Heart right ventricle (tissue), 16 donors: ENCODE measurements at regions of chr18 and their contacts with region 1.

Region 1: GRCh38 chr18:36296650-36297416 is 680 bp upstream of the FHOD3 start:
- DNase-seq: peak; percentile 52 to 67
- ATAC-seq: peak; percentile 47 to 81 (median 72)
- H3K4me3 ChIP-seq: peak overlapping the region; percentile 54 to 90 (median 78)
- H3K27ac ChIP-seq: peak overlapping the region; percentile 34 to 96 (median 84)
- H3K4me1 ChIP-seq: peaks cover 6 to 42% (median 14%) of the 10 kb centered on the region in 9 donors
- H3K27me3 ChIP-seq: peaks cover 0 to 74% (median 39%) of the 10 kb centered on the region in 7 donors
- CTCF ChIP-seq: peak in 8 of 9 donors; percentile 8 to 60 (median 43)

Region 2: GRCh38 chr18:35904389-35905037 is 392.3 kb before region 1 on chr18:
- intact Hi-C with region 1: no loop called
- DNase-seq: no peak
- ATAC-seq: peak in 1 of 8 donors; percentile 38
- H3K4me3 ChIP-seq: no peak overlapping the region
- H3K27ac ChIP-seq: no peak overlapping the region
- H3K4me1 ChIP-seq: no peaks in the 10 kb centered on the region
- H3K27me3 ChIP-seq: no peaks in the 10 kb centered on the region
- CTCF ChIP-seq: no peak

Region 3: GRCh38 chr18:35949903-35950627 is 346.8 kb before region 1 on chr18:
- intact Hi-C with region 1: no loop called
- DNase-seq: peak; percentile 45 to 60
- ATAC-seq: peak; percentile 74 to 92 (median 84)
- H3K4me3 ChIP-seq: peak overlapping the region; percentile 26 to 68 (median 62)
- H3K27ac ChIP-seq: no peak overlapping the region
- H3K4me1 ChIP-seq: peaks cover 0 to 9% (median 3%) of the 10 kb centered on the region in 9 donors
- H3K27me3 ChIP-seq: peaks cover 0 to 19% (median 0%) of the 10 kb centered on the region in 7 donors
- CTCF ChIP-seq: peak; percentile 88 to 96 (median 93)

Region 4: DNA sequence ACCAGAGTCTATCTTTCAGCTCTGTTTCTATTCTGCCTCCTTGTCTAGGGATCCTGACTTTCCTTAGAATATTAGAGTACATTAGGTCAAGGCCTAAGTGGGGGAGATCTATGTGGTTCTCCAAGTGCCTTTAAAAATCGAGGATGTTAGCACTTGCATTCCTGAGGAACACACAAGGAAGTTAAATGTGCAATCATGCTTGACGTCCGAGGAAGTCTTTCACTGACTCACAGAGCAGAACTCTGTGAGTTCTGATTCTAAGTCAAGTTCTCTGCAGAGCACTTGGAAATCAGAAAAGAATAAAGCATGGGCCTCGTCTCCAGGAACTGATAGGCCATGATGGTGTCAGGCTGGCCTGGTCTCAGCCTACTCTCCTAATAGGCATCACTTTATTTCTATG is 17.9 kb after region 1 on chr18:
- intact Hi-C with region 1: no loop called
- DNase-seq: no peak
- ATAC-seq: no peak
- H3K4me3 ChIP-seq: no peak overlapping the region
- H3K27ac ChIP-seq: peak overlapping the region in 4 of 10 donors; percentile 5 to 58 (median 22)
- H3K4me1 ChIP-seq: peaks cover 0 to 63% (median 32%) of the 10 kb centered on the region in 9 donors
- H3K27me3 ChIP-seq: peaks cover 0 to under 1% (median 0%) of the 10 kb centered on the region in 7 donors
- CTCF ChIP-seq: no peak

Region 5: DNA sequence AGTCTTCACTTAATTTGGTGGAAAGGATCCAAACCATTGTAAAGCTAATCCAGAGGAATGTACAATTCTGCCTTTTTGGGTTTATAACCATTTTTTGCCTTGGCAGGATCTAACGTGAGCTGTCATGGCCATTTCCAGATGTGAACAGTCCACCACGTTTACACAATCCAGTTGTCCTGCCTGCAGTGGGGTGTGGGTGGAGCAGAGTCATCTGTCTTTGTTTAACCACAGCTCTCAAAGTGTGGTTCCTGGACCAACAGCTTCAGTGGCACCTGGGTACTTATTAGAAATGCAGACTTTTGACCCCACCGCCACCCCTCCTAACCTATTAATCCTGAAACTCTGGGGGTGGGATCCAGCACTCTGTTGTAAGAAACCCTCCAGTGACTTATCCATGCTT is 36.6 kb after region 1 on chr18:
- intact Hi-C with region 1: loop called in 1 of 10 experiments (anchors 5 kb)
- DNase-seq: no peak
- ATAC-seq: no peak
- H3K4me3 ChIP-seq: no peak overlapping the region
- H3K27ac ChIP-seq: peak overlapping the region in 5 of 10 donors; percentile 2 to 60 (median 31)
- H3K4me1 ChIP-seq: peaks cover 0 to 73% (median 27%) of the 10 kb centered on the region in 9 donors
- H3K27me3 ChIP-seq: peaks cover 0 to 3% (median 0%) of the 10 kb centered on the region in 7 donors
- CTCF ChIP-seq: no peak

Region 6: DNA sequence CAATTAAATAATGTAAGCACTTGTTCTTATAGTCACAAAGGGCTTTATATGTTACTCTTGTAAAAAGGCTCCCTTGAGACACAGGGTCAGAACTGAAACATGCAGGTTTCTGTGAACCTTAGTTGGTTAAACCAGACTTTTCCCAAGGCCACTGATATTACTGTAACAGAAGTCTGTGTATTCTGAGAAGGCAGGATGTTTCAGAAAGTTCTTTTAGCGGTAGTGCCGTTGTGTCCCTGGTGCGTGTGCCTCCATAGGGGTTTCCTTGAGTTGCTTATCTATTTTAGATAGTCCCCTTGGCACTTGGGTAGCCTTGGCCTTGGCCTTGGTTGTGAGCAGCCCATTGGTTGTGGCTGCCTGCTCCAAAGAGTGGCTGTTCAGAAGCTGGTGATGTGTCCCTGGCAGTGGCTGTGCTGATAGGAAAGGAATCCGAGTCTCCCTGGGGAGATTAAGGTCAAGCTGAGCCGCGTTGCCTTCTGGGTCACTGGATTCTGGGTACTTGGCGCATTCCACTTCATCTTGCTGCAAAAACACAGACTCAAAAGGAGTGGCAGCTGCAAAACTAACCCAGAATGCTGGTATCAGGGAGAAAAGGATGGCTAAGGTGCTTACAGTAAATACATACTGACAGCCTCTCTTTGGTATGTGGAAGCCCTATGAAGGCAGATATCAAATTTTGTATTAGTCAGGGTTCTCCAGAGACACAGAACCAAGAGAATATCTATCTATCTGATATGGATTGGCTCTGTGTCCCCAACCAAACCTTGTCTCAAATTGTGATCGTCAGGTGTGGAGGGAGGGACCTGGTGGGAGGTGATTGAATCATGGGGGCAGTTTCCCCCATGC is 70.4 kb after region 1 on chr18:
- intact Hi-C with region 1: loop called in 2 of 10 experiments (anchors 5 to 10 kb)
- DNase-seq: peak; percentile 64 to 75
- ATAC-seq: peak; percentile 84 to 99 (median 94)
- H3K4me3 ChIP-seq: no peak overlapping the region
- H3K27ac ChIP-seq: peak overlapping the region in 8 of 10 donors; percentile 36 to 81 (median 66)
- H3K4me1 ChIP-seq: peaks cover 0 to 55% (median 24%) of the 10 kb centered on the region in 9 donors
- H3K27me3 ChIP-seq: peaks cover 0 to 4% (median 0%) of the 10 kb centered on the region in 7 donors
- CTCF ChIP-seq: no peak

Region 7: GRCh38 chr18:36372903-36373311 is 76.1 kb after region 1 on chr18:
- intact Hi-C with region 1: loop called in 2 of 10 experiments (anchors 5 to 10 kb)
- DNase-seq: no peak
- ATAC-seq: peak in 7 of 8 donors; percentile 40 to 79 (median 56)
- H3K4me3 ChIP-seq: no peak overlapping the region
- H3K27ac ChIP-seq: peak overlapping the region in 5 of 10 donors; percentile 6 to 64 (median 44)
- H3K4me1 ChIP-seq: peaks cover 2 to 67% (median 34%) of the 10 kb centered on the region in 9 donors
- H3K27me3 ChIP-seq: peaks cover 0 to 4% (median 0%) of the 10 kb centered on the region in 7 donors
- CTCF ChIP-seq: peak in 3 of 9 donors; percentile 12 to 43 (median 25)

Region 8: DNA sequence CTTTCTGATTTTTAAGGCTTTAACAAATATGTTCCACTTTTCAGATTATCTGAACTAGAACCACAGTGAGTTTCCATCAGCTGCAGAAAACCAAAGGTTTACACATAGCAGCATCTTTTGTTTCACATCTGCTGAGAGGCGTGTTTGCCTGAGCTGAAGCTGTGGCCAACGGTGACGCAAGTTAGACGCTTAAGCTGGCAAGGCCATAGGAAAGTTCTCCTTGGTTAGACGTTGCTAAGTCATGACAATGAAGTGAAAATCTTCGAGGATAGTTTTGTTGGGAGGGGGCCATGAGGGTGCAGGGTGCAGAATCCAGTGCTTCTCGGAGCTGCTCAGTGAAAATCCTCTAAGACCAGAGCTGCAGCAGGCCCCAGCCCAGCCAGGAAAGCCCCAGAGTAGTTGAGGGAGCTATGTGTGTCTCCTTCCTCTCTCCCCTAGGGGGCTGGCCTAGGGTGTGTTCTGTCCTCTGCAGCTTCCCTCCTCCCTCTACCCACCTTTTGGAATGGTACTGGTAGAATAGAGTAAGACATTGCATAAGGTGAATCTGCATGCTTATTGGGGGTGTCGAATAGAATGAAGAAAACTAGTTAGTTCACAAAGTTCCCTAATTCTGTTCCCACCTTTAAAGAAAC is 106.0 kb after region 1 on chr18:
- intact Hi-C with region 1: no loop called
- DNase-seq: peak; percentile 67 to 77
- ATAC-seq: peak; percentile 52 to 82 (median 72)
- H3K4me3 ChIP-seq: no peak overlapping the region
- H3K27ac ChIP-seq: peak overlapping the region; percentile 46 to 83 (median 79)
- H3K4me1 ChIP-seq: peaks cover 0 to 82% (median 47%) of the 10 kb centered on the region in 9 donors
- H3K27me3 ChIP-seq: no peaks in the 10 kb centered on the region
- CTCF ChIP-seq: peak in 3 of 9 donors; percentile 14 to 34 (median 26)

Region 9: DNA sequence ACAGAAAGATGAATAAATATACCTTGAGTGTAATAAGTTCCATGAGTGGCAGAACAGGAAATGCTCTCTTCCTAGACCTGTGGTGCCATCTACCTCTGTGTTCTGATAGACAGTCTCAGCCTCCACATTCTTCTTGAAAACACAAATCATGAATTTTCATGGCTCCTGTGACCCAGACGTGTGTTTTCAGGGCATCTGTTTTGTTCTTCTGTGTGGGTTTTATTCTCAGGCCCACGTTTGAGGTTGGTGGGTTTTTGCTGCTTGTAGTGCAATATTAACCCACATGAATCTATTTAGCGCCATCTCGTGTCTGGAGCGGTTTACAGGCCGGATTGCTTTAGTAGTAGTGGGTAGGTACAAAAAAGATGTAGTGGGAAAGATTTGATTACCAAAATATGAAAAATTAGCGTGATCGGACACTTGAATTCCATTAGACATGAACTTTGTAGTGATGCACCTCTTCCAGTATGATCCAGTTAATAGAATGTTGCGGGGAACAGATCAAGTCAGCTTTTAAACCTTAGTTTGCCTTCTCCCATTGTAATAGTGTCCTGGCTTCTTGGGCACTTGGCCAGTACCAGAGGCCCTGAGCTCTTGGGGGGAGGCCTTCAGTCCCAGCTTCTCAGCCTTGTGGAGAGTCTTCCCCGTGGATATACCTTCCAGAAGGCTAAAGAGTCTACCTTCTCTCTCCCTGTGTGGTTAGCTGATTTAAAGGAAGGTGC is 275.5 kb after region 1 on chr18:
- intact Hi-C with region 1: loop called in 7 of 10 experiments (anchors 5 to 10 kb)
- DNase-seq: no peak
- ATAC-seq: peak; percentile 45 to 82 (median 68)
- H3K4me3 ChIP-seq: no peak overlapping the region
- H3K27ac ChIP-seq: peak overlapping the region in 5 of 10 donors; percentile 1 to 31 (median 7)
- H3K4me1 ChIP-seq: peaks cover 0 to 22% (median 5%) of the 10 kb centered on the region in 9 donors
- H3K27me3 ChIP-seq: no peaks in the 10 kb centered on the region
- CTCF ChIP-seq: peak in 8 of 9 donors; percentile 18 to 65 (median 54)

Region 10: DNA sequence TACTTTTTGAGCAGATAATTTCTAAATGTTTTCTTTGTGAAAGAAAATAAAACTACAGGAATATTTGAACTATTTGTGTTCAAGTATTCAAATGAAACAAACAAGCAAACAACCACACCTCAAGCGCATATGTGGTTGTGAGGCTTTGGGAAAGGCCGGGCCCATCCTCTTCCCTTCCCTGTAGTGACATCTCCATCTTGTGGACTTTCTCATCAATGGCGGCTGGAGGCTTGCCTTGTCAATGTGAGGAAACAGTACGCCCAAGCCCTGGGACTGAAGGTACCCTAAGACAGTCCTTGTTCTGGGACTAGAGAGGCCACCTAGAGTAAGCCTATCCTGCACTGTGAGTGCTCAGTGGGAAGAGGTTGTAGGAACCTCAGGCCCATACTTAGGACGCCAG is 365.2 kb after region 1 on chr18:
- intact Hi-C with region 1: loop called in 1 of 10 experiments (anchors 5 kb)
- DNase-seq: no peak
- ATAC-seq: peak in 2 of 8 donors; percentile 35 to 48
- H3K4me3 ChIP-seq: no peak overlapping the region
- H3K27ac ChIP-seq: peak overlapping the region in 2 of 10 donors; percentile 9 to 12
- H3K4me1 ChIP-seq: peaks cover 0 to 19% (median 0%) of the 10 kb centered on the region in 9 donors
- H3K27me3 ChIP-seq: no peaks in the 10 kb centered on the region
- CTCF ChIP-seq: peak in 3 of 9 donors; percentile 22 to 40 (median 29)